Lower leg skin (tissue), 4 donors: ENCODE measurements at regions of chrX and their contacts with region 1.

Region 1: GRCh38 chrX:41133551-41133950 is 48.3 kb downstream of the USP9X start:
- DNase-seq: no peak
- H3K4me3 ChIP-seq: no peak overlapping the region
- CTCF ChIP-seq: no peak
- POLR2A ChIP-seq: no peak

Region 2: DNA sequence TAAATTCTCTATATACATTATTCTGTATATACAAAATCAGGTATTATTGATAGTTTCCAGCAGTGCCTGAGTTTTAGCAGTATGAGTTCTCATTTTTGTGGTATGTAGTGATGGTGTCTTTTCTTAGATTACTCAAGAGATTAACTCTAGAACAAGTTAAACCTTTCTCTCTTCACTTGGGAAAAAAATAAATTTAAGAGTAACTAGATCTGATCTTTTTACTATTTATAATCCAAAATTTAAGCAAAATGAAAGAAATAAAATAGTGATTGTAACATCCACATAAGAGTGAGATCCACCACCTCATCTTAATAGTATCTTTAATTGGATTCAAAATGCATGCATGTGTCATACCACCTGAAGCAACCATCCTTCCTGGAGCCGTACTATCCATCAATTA is 76.3 kb after region 1 on chrX:
- intact Hi-C with region 1: loop called (anchors 5 kb)
- DNase-seq: no peak
- H3K4me3 ChIP-seq: no peak overlapping the region
- CTCF ChIP-seq: no peak
- POLR2A ChIP-seq: no peak

Region 3: DNA sequence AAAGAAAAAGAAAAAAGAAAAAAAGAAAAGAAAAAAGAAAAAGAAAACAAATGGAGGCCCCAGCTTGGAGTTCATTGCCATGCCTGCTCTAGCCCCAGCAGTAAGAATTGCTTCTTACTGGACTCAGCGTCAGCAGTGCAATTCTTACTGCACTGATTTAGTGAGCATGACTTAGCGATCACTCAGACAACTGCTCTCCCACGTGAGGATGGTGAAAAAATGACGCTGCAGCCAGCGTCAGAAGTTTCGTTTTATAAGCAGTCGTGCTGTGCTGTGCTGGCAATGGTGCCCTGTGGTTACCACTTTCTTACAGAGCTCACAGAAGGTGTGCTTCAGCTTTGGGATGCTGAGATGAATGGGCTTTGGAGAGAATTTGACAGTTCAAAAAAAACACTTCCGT is 132.1 kb after region 1 on chrX:
- intact Hi-C with region 1: no loop called
- DNase-seq: peak in 1 of 2 donors; percentile 14
- H3K4me3 ChIP-seq: no peak overlapping the region
- CTCF ChIP-seq: no peak
- POLR2A ChIP-seq: no peak

Region 4: GRCh38 chrX:42460706-42461105 is 1327.2 kb after region 1 on chrX:
- intact Hi-C with region 1: no loop called
- DNase-seq: no peak
- H3K4me3 ChIP-seq: no peak overlapping the region
- CTCF ChIP-seq: no peak
- POLR2A ChIP-seq: no peak